Naive thymus-derived CD8-positive, alpha-beta T cell (primary cell): ENCODE measurements at regions of chr11 and their contacts with region 1.

Region 1: DNA sequence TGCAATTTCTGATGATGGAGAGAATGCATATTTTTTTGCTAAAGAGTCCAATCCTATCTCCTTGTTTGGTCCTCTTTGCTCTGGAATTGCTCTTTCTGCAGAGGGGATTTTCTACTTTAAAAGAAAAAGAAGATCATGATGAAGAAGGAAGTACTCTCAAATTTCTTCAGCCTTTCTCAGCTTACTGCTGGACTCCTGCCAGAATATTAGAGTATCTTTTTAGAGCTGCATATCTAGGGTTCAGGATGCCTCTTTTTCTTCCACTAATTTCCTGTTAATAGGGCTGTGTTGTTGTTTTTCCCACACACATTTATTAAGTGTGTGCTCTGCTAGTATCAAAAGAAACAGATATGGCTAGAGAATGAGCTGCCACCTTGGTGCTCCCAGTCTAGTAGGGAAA is 18.2 kb downstream of the UBASH3B start:
- DNase-seq: peak in 1 of 10 donors; percentile 15
- ATAC-seq: no peak
- H3K4me3 Mint-ChIP-seq: peak overlapping the region in 5 of 10 donors; percentile 12 to 70 (median 22)
- H3K27ac Mint-ChIP-seq: peak overlapping the region in 7 of 10 donors; percentile 43 to 94 (median 77)
- H3K4me1 Mint-ChIP-seq: peaks cover 42 to 94% (median 85%) of the 10 kb centered on the region in 4 donors
- H3K27me3 Mint-ChIP-seq: no peaks in the 10 kb centered on the region

Region 2: DNA sequence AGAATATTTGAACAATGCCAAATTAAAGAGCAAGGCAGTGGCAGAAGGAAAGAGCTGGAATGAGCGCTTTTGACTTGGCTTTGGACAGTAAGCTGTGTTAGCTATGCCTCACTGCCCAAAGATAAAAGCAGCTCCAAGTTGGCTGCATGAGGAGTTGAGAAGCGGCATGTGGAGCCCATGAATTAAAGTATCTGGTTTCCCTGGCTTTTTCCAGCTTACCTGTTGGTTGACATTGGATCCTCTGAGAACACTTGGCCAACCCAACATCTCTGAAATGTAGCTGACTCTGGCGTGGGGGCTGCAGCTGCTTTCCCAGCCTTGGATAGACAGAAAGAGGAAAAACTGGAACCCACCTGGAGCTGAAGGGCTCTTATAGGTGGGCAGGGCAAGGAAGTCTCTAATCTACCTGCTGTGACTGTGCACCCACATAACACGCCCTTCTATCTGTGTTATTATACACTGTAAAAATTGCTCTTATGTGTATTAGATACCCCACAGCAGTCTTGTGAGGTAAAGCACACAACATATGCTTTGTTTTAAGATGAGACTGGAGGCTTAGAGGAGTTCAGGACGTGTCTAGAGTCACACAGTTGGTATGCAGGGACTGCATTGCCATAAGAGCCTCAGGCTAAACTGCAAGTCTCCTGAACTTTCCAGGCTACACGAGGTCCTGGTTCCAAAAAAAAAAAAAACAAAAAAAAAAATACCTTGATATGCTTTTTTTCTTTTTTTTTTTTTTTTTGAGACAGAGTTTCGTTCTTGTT is 12.3 kb before region 1 on chr11:
- POLR2A ChIA-PET with region 1: interaction called, 51 read pairs
- DNase-seq: no peak
- ATAC-seq: no peak
- H3K4me3 Mint-ChIP-seq: peak overlapping the region in 2 of 10 donors; percentile 8 to 81
- H3K27ac Mint-ChIP-seq: peak overlapping the region in 9 of 10 donors; percentile 34 to 95 (median 83)
- H3K4me1 Mint-ChIP-seq: peaks cover 38 to 94% (median 83%) of the 10 kb centered on the region in 4 donors
- H3K27me3 Mint-ChIP-seq: no peaks in the 10 kb centered on the region

Region 3: GRCh38 chr11:122690801-122691548 is 17.3 kb after region 1 on chr11:
- POLR2A ChIA-PET with region 1: interaction called, 56 read pairs
- DNase-seq: peak in 3 of 10 donors; percentile 30 to 37 (median 31)
- ATAC-seq: peak; percentile 61 to 68
- H3K4me3 Mint-ChIP-seq: peak overlapping the region; percentile 37 to 83 (median 80)
- H3K27ac Mint-ChIP-seq: peak overlapping the region; percentile 87 to 96 (median 93)
- H3K4me1 Mint-ChIP-seq: peaks cover 47 to 86% (median 80%) of the 10 kb centered on the region in 4 donors
- H3K27me3 Mint-ChIP-seq: no peaks in the 10 kb centered on the region

Region 4: GRCh38 chr11:122717264-122717867 is 43.7 kb after region 1 on chr11:
- POLR2A ChIA-PET with region 1: interaction called, 11 read pairs
- DNase-seq: peak in 8 of 10 donors; percentile 9 to 59 (median 32)
- ATAC-seq: peak; percentile 50 to 72
- H3K4me3 Mint-ChIP-seq: peak overlapping the region; percentile 30 to 84 (median 66)
- H3K27ac Mint-ChIP-seq: peak overlapping the region; percentile 43 to 94 (median 88)
- H3K4me1 Mint-ChIP-seq: peaks cover 32 to 98% (median 78%) of the 10 kb centered on the region in 4 donors
- H3K27me3 Mint-ChIP-seq: no peaks in the 10 kb centered on the region